Right ventricle myocardium superior (tissue), 1 donor: ENCODE measurements at regions of chr1 and their contacts with region 1.

Region 1: GRCh38 chr1:181189691-181190363 is 101.3 kb downstream of the IER5 start:
- DNase-seq: peak; percentile 85
- ATAC-seq: peak; percentile 97

Region 2: DNA sequence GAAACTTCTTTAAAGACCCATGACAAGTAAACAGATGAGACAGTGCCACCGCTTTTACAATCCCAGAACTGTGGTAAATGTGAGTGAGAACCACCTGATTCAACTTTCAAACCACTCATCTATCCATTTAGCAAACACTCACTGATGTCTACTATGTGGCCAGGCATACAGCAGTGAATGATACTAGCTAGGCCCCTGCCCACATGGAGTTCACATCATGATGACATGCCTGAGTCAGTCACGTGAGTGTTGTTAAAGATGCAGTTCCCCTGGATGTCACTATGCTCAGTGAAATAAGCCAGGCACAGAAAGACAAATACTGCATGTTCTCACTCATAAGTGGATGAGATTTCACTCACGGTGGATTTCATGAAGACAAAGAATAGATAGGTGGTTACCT is 195.6 kb before region 1 on chr1:
- intact Hi-C with region 1: no loop called
- DNase-seq: no peak
- ATAC-seq: no peak

Region 3: GRCh38 chr1:181424786-181425403 is 235.1 kb after region 1 on chr1:
- intact Hi-C with region 1: loop called (anchors 2 kb)
- DNase-seq: peak; percentile 68
- ATAC-seq: peak; percentile 62